ENCODE measurements at regions of chr11 and their contacts with region 1.

Region 1: GRCh38 chr11:84384731-84385130 is 1098.6 kb upstream of the CCDC90B start:
- DNase-seq: peak; percentile 2 to 88 (median 67)

Region 2: DNA sequence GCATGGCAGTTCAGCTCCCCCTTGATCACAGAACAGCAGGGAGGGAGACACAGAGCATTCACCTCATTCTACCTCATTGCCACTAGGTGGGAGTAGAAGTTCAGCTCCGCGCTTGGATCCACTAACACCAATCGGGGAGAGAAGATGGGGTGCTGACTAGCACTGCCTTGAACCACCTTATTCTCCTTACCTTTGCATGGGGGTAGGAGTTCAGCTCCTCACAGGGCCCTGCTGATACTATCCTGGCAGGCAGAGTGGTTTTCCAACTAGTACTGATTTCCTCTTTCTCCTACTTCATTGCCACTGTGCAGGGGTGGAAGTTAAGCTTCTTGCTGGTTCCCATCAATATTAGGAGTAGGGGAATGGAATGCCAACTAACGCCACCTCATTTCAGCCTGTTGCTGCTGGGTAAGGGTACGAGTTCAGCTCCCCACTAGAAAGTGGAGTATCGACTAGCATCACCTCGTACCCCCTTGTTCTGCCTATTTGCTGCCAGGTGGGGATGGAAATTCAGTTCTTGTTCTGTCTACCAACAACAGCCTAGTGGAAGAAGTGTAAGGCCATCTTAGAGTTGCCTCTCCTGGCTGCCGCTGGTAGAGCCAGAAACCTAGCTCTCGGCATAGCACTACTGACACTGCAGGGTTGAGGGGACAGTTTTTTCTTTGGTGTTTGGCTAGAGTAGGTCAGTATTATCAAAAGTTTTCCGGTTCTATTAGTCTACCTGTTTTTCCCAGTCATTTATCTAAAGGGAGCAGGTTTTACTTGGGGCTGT is 547.7 kb before region 1 on chr11:
- intact Hi-C with region 1: loop called (anchors 10 kb)
- DNase-seq: peak; percentile 27 to 87 (median 68)